ENCODE measurements at regions of chr11 and their contacts with region 1.

Region 1: DNA sequence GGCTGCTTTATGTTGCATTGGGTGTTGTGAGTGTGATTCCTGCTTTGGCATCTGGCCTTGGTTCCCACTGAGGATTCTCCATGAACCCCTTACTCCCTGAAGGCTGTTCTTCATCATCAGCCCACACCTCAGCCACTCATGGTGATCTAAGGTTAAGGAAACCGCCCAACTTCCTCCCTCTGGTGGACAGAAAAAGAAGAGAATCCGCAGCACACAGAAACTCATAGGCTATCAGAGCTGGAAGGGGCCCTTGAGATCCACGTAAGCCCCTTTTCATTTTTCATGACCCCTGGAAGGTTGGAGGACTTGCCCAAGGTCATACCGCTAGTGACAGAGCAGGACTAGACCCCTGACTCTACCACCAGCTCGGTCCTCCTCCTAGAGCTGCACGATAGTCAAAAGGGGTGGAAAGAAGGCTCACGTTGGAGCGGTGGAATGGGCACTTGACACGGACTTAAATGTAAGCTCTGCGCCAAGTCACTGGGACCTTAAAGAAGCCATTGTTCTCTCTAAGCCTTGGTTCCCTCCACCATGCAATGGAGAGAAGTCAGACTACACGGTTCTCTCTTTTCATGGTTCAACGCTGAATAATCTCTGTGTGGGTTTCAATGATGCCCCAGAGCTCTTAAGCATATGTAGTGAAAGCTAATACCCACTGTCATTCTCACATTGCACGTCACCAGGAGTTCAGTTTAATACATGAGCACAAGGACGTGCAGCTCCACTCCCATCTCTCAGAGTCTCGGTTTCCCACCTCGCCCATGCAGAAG is 83.6 kb upstream of the CRTAM start:
- DNase-seq: peak; percentile 53
- H3K4me3 Mint-ChIP-seq: no peak overlapping the region
- H3K27ac Mint-ChIP-seq: no peak overlapping the region
- H3K4me1 Mint-ChIP-seq: peaks cover 46% of the 10 kb centered on the region
- H3K27me3 Mint-ChIP-seq: no peaks in the 10 kb centered on the region

Region 2: GRCh38 chr11:122628810-122629555 is 125.8 kb before region 1 on chr11:
- CTCF ChIA-PET with region 1: interaction called, 10 read pairs
- POLR2A ChIA-PET with region 1: no interaction called
- DNase-seq: peak; percentile 49
- H3K4me3 Mint-ChIP-seq: no peak overlapping the region
- H3K27ac Mint-ChIP-seq: no peak overlapping the region
- H3K4me1 Mint-ChIP-seq: peaks cover 6% of the 10 kb centered on the region
- H3K27me3 Mint-ChIP-seq: peaks cover under 1% of the 10 kb centered on the region

Region 3: GRCh38 chr11:122655527-122656072 is 99.1 kb before region 1 on chr11 and contains the start of gene UBASH3B:
- CTCF ChIA-PET with region 1: interaction called, 34 read pairs
- POLR2A ChIA-PET with region 1: no interaction called
- DNase-seq: peak; percentile 66
- H3K4me3 Mint-ChIP-seq: peak within 1 kb of the TSS; percentile 89
- H3K27ac Mint-ChIP-seq: peak within 1 kb of the TSS; percentile 82
- H3K4me1 Mint-ChIP-seq: peaks cover 17% of the 10 kb centered on the region
- H3K27me3 Mint-ChIP-seq: peaks cover 41% of the 10 kb centered on the region
- total RNA-seq, gene UBASH3B: 15.2 to 15.8 TPM

Region 4: GRCh38 chr11:122769126-122769780 is 14.5 kb after region 1 on chr11:
- CTCF ChIA-PET with region 1: interaction called, 14 read pairs
- POLR2A ChIA-PET with region 1: no interaction called
- DNase-seq: no peak
- H3K4me3 Mint-ChIP-seq: no peak overlapping the region
- H3K27ac Mint-ChIP-seq: no peak overlapping the region
- H3K4me1 Mint-ChIP-seq: no peaks in the 10 kb centered on the region
- H3K27me3 Mint-ChIP-seq: no peaks in the 10 kb centered on the region

Measured in activated CD4-positive, alpha-beta T cell treated with anti-CD3 and anti-CD28 coated beads, Interleukin-2, amount 10 ng/mL, durations not matched to agents 7 days and 5 days (primary cell).